GM12878 (cell line): ENCODE measurements at regions of chr15 and their contacts with region 1.

Region 1: DNA sequence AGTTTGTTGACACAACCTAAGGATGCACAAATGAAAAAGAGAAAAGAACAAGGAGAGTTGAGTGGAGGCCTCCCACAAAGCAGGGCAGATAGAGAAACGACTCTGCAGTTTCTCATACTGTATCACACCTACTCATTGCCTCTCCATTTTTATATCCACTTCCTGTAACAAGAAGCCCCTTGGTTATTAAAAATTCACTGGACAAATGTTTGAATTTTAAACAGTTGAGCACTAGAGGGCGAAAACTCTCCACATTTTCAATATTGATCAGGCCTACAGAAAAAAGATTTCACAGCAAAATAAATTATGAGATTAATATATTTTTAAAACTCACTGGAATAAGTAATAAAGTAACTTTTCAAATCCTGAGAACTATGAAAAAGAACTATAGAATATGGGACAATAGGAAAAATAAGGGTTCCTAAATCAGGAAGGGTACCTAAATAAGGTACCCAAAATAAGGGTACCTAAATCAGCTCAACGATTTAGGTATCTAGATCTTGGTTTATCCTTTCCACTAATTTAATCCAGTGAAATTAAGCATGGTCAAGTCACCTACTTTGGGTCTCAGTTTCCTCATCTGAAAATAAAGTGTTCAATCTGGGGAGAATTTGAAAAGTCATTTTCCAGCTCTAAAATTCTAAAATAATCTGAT is 47.0 kb upstream of the PPIB start:
- DNase-seq: peak; percentile 9
- ATAC-seq: peak; percentile 72
- H3K4me3 ChIP-seq: no peak overlapping the region
- H3K27ac ChIP-seq: no peak overlapping the region
- H3K4me1 ChIP-seq: no peaks in the 10 kb centered on the region
- H3K27me3 ChIP-seq: no peaks in the 10 kb centered on the region
- CTCF ChIP-seq: peak; percentile 29 to 54 (median 32); a peak in 4 of 6 replicates
- EP300 ChIP-seq: no peak
- POLR2A ChIP-seq: no peak
- RAD21 ChIP-seq: peak; percentile 78

Region 2: GRCh38 chr15:64355944-64356709 is 146.3 kb after region 1 on chr15 and contains the start of gene CSNK1G1:
- CTCF ChIA-PET with region 1: interaction called, 6 read pairs
- POLR2A ChIA-PET with region 1: interaction called, 4 read pairs
- RAD21 ChIA-PET with region 1: no interaction called
- SMC1A ChIA-PET with region 1: interaction called, 4 read pairs
- in situ Hi-C with region 1: no loop called
- intact Hi-C with region 1: loop called (anchors 2 kb)
- DNase-seq: peak; percentile 90
- ATAC-seq: peak; percentile 99
- H3K4me3 ChIP-seq: peak within 1 kb of the TSS; percentile 77
- H3K27ac ChIP-seq: peak within 1 kb of the TSS; percentile 64
- H3K4me1 ChIP-seq: peaks cover 3% of the 10 kb centered on the region; the same call in 1 of the 2 replicates
- H3K27me3 ChIP-seq: no peaks in the 10 kb centered on the region
- CTCF ChIP-seq: peak in 2 of 3 experiments; percentile 8 to 46; a peak in 2 of 6 replicates
- EP300 ChIP-seq: no peak; a peak in 1 of 4 replicates
- POLR2A ChIP-seq: peak; percentile 72
- RAD21 ChIP-seq: peak; percentile 45
- polyA plus RNA-seq, gene CSNK1G1: 6.1 to 6.2 TPM

Region 3: GRCh38 chr15:64387562-64388168 is 177.9 kb after region 1 on chr15 and contains the start of gene TRIP4:
- CTCF ChIA-PET with region 1: interaction called, 4 read pairs
- POLR2A ChIA-PET with region 1: no interaction called
- RAD21 ChIA-PET with region 1: no interaction called
- SMC1A ChIA-PET with region 1: no interaction called
- in situ Hi-C with region 1: no loop called
- intact Hi-C with region 1: loop called (anchors 10 kb)
- DNase-seq: peak; percentile 92
- ATAC-seq: peak; percentile 100
- H3K4me3 ChIP-seq: peak within 1 kb of the TSS; percentile 92
- H3K27ac ChIP-seq: peak within 1 kb of the TSS; percentile 71
- H3K4me1 ChIP-seq: no peaks in the 10 kb centered on the region
- H3K27me3 ChIP-seq: no peaks in the 10 kb centered on the region
- CTCF ChIP-seq: no peak; a peak in 1 of 6 replicates
- EP300 ChIP-seq: 0 out of 4 replicates have a peak, but pooled peaks of 1 of the 2 experiments have one; percentile 11
- POLR2A ChIP-seq: peak; percentile 97
- RAD21 ChIP-seq: peak; percentile 51; the same call in 1 of the 2 replicates
- polyA plus RNA-seq, gene TRIP4: 20.0 to 23.8 TPM